CD4-positive, alpha-beta T cell (primary cell): ENCODE measurements at regions of chr6 and their contacts with region 1.

Region 1: GRCh38 chr6:148780918-148781436 is 34.1 kb downstream of the UST start:
- DNase-seq: peak in 2 of 14 experiments; percentile 17 to 42
- ATAC-seq: peak; percentile 34
- H3K4me3 ChIP-seq: peak overlapping the region; percentile 31
- H3K4me3 Mint-ChIP-seq: peak overlapping the region; percentile 58
- H3K27ac ChIP-seq: peak overlapping the region in 1 of 2 donors; percentile 30
- H3K27ac Mint-ChIP-seq: peak overlapping the region; percentile 27
- H3K4me1 ChIP-seq: peaks cover 9% of the 10 kb centered on the region
- H3K4me1 Mint-ChIP-seq: peaks cover 16% of the 10 kb centered on the region
- H3K27me3 ChIP-seq: no peaks in the 10 kb centered on the region
- H3K27me3 Mint-ChIP-seq: no peaks in the 10 kb centered on the region
- CTCF ChIP-seq: no peak

Region 2: GRCh38 chr6:148559848-148560433 is 221.0 kb before region 1 on chr6:
- CTCF ChIA-PET with region 1: no interaction called
- POLR2A ChIA-PET with region 1: no interaction called
- intact Hi-C with region 1: loop called in 1 of 2 experiments (anchors 5 kb)
- DNase-seq: peak; percentile 40 to 81 (median 56)
- ATAC-seq: peak; percentile 86
- H3K4me3 ChIP-seq: peak overlapping the region; percentile 27
- H3K4me3 Mint-ChIP-seq: no peak overlapping the region
- H3K27ac ChIP-seq: no peak overlapping the region
- H3K27ac Mint-ChIP-seq: no peak overlapping the region
- H3K4me1 ChIP-seq: peaks cover 9% of the 10 kb centered on the region
- H3K4me1 Mint-ChIP-seq: peaks cover 8% of the 10 kb centered on the region
- H3K27me3 ChIP-seq: no peaks in the 10 kb centered on the region
- H3K27me3 Mint-ChIP-seq: peaks cover 26% of the 10 kb centered on the region
- CTCF ChIP-seq: peak; percentile 91